Transverse colon (tissue), 4 donors: ENCODE measurements at regions of chr1 and their contacts with region 1.

Region 1: DNA sequence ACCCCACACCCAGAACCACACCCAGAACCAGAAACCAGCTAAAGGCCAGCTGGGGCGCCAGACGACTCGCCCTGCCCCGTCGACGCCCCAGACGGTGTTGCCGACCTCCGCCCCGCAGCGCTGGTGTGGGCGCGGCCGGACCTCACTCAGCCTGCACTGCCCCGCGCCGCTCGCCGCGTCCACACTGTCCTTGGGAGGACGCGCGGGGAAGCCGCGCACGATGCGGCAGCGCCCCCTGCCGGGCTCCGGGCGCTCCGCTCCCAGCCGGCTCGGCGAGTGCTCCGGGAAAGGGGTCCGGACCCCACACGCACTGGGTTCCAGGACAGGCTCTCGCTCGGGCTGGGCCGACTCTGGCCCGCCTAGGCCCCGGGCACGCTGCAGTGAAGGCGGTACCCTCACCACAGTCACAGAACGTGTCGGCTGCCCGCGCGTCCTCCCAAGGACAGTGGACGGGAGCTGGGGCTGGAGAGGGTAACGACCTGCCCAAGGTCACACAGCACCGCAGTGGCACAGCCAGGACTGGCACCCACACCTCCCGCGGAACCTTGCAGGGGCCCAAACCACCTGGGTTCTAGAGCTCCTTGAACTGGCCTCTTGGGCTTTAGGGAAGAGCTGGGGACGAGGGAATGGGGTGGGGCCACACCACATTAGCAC is 90.2 kb downstream of the DMRTA2 start:
- DNase-seq: peak; percentile 78
- H3K4me3 ChIP-seq: peak overlapping the region; percentile 9 to 55 (median 44)
- H3K27ac ChIP-seq: peak overlapping the region in 3 of 4 donors; percentile 25 to 33 (median 26)
- H3K4me1 ChIP-seq: peaks cover 3 to 18% (median 11%) of the 10 kb centered on the region in 4 donors
- H3K27me3 ChIP-seq: peaks cover 42% of the 10 kb centered on the region
- CTCF ChIP-seq: peak; percentile 69 to 90 (median 89)
- EP300 ChIP-seq: no peak
- POLR2A ChIP-seq: no peak

Region 2: DNA sequence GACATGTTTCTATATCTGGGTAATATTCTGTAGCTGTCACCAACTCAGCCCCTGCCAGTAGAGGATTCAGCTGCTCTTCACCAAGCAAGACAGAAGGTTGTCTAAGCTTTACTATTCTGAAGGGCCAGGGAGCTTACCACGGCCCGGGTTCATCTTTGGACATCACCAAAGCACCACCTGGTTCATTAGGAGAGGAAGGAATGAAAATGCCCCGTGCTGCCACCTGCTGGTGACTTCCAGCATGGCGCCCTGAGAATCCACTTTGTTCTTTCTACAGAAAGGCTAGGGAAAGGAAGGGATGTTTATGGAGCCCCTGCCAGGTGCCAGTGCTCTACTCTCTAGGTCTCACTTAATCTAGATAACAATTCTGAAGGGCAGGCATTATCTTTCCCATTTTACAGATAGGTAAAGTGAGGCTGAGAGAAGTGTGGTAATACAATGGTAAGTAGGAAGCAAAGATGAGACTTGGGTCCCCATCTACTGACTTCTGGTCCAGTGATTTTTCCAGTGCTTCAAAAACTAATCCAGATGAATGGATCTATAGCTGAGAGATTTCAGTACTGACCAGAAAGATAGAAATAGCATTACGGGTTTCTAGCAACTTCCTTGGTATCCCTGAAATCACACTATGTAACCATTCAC is 1635.9 kb before region 1 on chr1:
- in situ Hi-C with region 1: loop called in 2 of 4 experiments (anchors 25 kb)
- intact Hi-C with region 1: no loop called
- DNase-seq: peak; percentile 63
- H3K4me3 ChIP-seq: no peak overlapping the region
- H3K27ac ChIP-seq: no peak overlapping the region
- H3K4me1 ChIP-seq: no peaks in the 10 kb centered on the region
- H3K27me3 ChIP-seq: no peaks in the 10 kb centered on the region
- CTCF ChIP-seq: peak; percentile 65 to 93 (median 90)
- EP300 ChIP-seq: no peak
- POLR2A ChIP-seq: no peak

Region 3: GRCh38 chr1:49765034-49765433 is 568.0 kb before region 1 on chr1:
- in situ Hi-C with region 1: no loop called
- intact Hi-C with region 1: loop called (anchors 5 kb)
- DNase-seq: no peak
- H3K4me3 ChIP-seq: no peak overlapping the region
- H3K27ac ChIP-seq: no peak overlapping the region
- H3K4me1 ChIP-seq: no peaks in the 10 kb centered on the region
- H3K27me3 ChIP-seq: no peaks in the 10 kb centered on the region
- CTCF ChIP-seq: no peak
- EP300 ChIP-seq: no peak
- POLR2A ChIP-seq: no peak